Left lung (tissue), 14 donors: ENCODE measurements at regions of chr7 and their contacts with region 1.

Region 1: GRCh38 chr7:7761340-7761980 is 43.1 kb upstream of the RPA3 start:
- DNase-seq: peak in 1 of 4 donors; percentile 45
- ATAC-seq: peak; percentile 71
- H3K4me3 ChIP-seq: peak overlapping the region; percentile 23 to 43
- H3K27ac ChIP-seq: peak overlapping the region; percentile 57 to 77
- H3K4me1 ChIP-seq: peaks cover 6 to 15% of the 10 kb centered on the region in 2 donors
- H3K27me3 ChIP-seq: no peaks in the 10 kb centered on the region
- CTCF ChIP-seq: peak in 1 of 2 donors; percentile 32

Region 2: DNA sequence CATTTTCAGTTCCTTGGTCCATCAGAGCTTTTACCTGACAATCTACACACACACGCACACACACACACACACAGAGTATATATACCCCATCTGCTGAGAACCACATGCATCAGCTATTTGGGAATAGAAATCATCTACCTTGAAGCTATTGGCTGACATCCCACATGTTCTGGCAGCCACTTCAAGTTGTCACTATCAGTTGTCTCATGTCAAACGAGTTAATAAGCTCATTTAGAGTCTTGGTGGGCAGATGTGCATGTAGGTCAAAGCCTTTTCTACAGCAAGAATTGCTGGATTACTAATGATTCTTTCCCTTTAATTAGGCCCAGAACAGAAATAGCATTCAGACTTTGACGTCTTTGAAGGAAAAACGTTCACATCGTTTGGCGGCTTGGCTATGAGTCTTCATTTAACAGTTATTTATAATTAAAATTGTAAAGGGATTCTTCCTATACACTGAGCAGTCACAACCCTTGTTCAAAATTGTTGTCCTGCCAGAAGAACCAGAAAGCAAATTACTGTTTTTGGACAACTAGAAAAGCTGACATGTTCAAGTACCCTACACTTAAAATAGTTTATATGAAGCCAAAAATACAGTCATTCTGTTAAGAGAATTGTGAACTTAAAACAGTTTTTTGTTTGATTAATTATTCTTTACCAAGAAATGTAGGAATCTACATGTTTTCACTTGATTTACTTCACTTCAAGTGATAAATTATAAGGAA is 262.4 kb before region 1 on chr7:
- intact Hi-C with region 1: no loop called
- DNase-seq: no peak
- ATAC-seq: no peak
- H3K4me3 ChIP-seq: no peak overlapping the region
- H3K27ac ChIP-seq: no peak overlapping the region
- H3K4me1 ChIP-seq: no peaks in the 10 kb centered on the region
- H3K27me3 ChIP-seq: no peaks in the 10 kb centered on the region
- CTCF ChIP-seq: no peak

Region 3: DNA sequence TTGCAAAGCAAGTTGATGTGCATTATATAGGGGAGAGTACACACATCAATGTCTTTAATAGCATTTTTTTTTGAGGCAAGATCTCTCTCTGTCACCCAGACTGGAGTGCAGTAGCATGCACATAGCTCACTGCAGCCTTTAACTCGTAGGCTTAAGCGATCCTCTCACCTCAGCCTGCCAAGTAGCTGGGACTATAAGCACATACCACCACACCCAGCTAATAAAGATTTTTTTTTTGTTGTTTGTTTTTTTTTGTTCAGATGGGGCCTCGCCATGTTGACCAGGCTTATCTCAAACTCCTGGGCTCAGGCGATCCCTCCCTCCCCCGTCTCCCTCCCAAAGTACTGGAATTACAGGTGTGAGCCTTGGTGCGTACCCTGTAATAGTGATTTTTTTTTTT is 119.4 kb before region 1 on chr7:
- intact Hi-C with region 1: no loop called
- DNase-seq: peak in 1 of 4 donors; percentile 38
- ATAC-seq: no peak
- H3K4me3 ChIP-seq: peak overlapping the region in 1 of 2 donors; percentile 64
- H3K27ac ChIP-seq: no peak overlapping the region
- H3K4me1 ChIP-seq: peaks cover 3 to 29% of the 10 kb centered on the region in 2 donors
- H3K27me3 ChIP-seq: no peaks in the 10 kb centered on the region
- CTCF ChIP-seq: no peak

Region 4: GRCh38 chr7:7681179-7681935 is 80.1 kb before region 1 on chr7:
- intact Hi-C with region 1: loop called in 1 of 2 experiments (anchors 10 kb)
- DNase-seq: peak in 1 of 4 donors; percentile 67
- ATAC-seq: peak; percentile 95
- H3K4me3 ChIP-seq: no peak overlapping the region
- H3K27ac ChIP-seq: peak overlapping the region in 1 of 2 donors; percentile 33
- H3K4me1 ChIP-seq: peaks cover 4 to 15% of the 10 kb centered on the region in 2 donors
- H3K27me3 ChIP-seq: no peaks in the 10 kb centered on the region
- CTCF ChIP-seq: peak; percentile 37 to 55